ENCODE measurements at regions of chrX and their contacts with region 1.

Region 1: GRCh38 chrX:22081475-22082092 is 49.5 kb downstream of the PHEX start:
- DNase-seq: no peak
- ATAC-seq: peak; percentile 96
- H3K4me3 ChIP-seq: no peak overlapping the region
- H3K27ac ChIP-seq: no peak overlapping the region
- H3K4me1 ChIP-seq: no peaks in the 10 kb centered on the region
- H3K27me3 ChIP-seq: no peaks in the 10 kb centered on the region
- CTCF ChIP-seq: peak; percentile 56 to 79 (median 77)
- EP300 ChIP-seq: no peak
- POLR2A ChIP-seq: no peak
- RAD21 ChIP-seq: peak; percentile 53

Region 2: DNA sequence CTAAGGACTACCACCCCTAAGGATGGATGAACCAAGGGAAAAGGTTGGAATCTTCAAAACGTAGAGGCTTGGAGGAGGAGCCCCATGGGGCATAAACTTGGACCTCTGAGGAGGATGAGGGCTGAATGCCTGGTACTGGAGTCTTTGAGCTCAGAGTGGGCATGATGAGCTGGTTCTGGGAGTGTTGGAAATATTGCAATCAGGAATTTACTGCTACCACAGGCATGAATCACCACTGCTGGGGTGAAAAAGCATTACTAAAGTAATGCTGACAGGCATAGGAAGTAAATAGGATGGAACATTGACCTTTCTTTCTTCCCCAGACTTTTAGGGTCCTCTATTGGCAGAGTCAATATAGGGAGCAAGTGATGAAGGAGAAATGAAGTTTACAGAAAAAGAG is 1709.1 kb before region 1 on chrX:
- CTCF ChIA-PET with region 1: no interaction called
- POLR2A ChIA-PET with region 1: no interaction called
- RAD21 ChIA-PET with region 1: no interaction called
- SMC1A ChIA-PET with region 1: no interaction called
- in situ Hi-C with region 1: no loop called
- intact Hi-C with region 1: no loop called
- DNase-seq: no peak
- ATAC-seq: no peak
- H3K4me3 ChIP-seq: no peak overlapping the region
- H3K27ac ChIP-seq: no peak overlapping the region
- H3K4me1 ChIP-seq: no peaks in the 10 kb centered on the region
- H3K27me3 ChIP-seq: no peaks in the 10 kb centered on the region; a peak in 1 of 4 replicates
- CTCF ChIP-seq: no peak
- EP300 ChIP-seq: no peak
- POLR2A ChIP-seq: no peak
- RAD21 ChIP-seq: no peak

Region 3: DNA sequence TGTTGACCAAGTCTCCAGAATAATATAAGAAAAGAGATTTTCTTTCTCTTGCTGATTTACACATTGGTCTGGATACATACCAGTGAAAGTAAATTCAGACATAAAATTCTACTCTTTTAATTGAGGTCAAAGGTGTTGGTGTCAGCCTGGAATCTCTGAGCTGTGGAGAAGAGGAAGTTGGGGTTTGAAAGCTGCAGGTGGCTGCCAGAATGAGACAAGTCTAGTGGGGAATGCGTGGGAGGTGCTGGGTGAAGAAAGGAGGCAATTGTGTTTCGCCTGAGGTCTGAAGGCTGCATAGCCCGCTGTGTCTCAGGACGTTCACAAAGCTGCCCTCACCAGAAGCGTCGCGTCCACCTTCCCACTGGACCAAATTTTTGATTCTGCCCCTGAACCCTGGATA is 18.3 kb before region 1 on chrX:
- CTCF ChIA-PET with region 1: interaction called, 80 read pairs
- POLR2A ChIA-PET with region 1: interaction called, 3 read pairs
- RAD21 ChIA-PET with region 1: interaction called, 23 read pairs
- SMC1A ChIA-PET with region 1: interaction called, 14 read pairs
- in situ Hi-C with region 1: no loop called
- intact Hi-C with region 1: no loop called
- DNase-seq: peak; percentile 64
- ATAC-seq: peak; percentile 74
- H3K4me3 ChIP-seq: no peak overlapping the region
- H3K27ac ChIP-seq: peak overlapping the region; percentile 74
- H3K4me1 ChIP-seq: peaks cover 20% of the 10 kb centered on the region
- H3K27me3 ChIP-seq: no peaks in the 10 kb centered on the region
- CTCF ChIP-seq: no peak
- EP300 ChIP-seq: peak; percentile 52 to 73; a peak in 2 of 4 replicates
- POLR2A ChIP-seq: no peak
- RAD21 ChIP-seq: no peak

Region 4: DNA sequence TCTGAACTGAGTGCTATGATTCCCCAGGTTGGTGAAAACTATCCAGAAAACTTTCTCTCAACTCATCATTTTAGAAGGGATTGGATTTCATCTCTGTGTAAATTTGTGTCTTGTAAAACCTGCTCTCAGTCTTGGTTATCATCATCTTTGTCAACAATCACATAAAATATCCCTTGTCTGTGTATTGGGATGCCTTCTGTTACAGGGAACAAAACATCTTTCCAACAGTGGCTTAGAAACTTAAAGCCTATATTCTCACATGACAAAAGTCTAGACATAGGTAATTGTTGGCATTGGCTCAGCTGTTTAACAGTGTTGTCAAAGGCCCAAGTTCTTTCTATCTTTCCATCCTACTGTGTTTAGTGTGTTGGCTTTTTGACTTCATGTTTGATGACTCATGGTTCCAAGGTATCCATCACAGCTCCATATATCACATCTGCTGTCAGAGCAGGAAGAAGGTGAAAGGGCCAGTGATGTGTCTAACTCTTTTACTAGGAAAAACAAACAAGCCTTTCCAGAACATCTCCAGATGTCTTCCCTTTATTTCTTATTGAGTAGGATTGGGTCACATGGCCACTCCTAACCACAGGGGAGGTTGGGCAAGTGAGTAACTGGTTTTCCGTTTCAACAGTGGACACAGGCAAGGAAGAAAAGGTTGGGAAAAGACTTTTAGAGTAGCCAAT is 15.6 kb after region 1 on chrX:
- CTCF ChIA-PET with region 1: interaction called, 13 read pairs
- POLR2A ChIA-PET with region 1: no interaction called
- RAD21 ChIA-PET with region 1: interaction called, 3 read pairs
- SMC1A ChIA-PET with region 1: interaction called, 9 read pairs
- in situ Hi-C with region 1: no loop called
- intact Hi-C with region 1: no loop called
- DNase-seq: no peak
- ATAC-seq: no peak
- H3K4me3 ChIP-seq: no peak overlapping the region
- H3K27ac ChIP-seq: no peak overlapping the region
- H3K4me1 ChIP-seq: no peaks in the 10 kb centered on the region
- H3K27me3 ChIP-seq: no peaks in the 10 kb centered on the region
- CTCF ChIP-seq: no peak
- EP300 ChIP-seq: no peak
- POLR2A ChIP-seq: no peak
- RAD21 ChIP-seq: no peak

Region 5: GRCh38 chrX:22122510-22122909 is 40.9 kb after region 1 on chrX:
- CTCF ChIA-PET with region 1: interaction called, 10 read pairs
- POLR2A ChIA-PET with region 1: no interaction called
- RAD21 ChIA-PET with region 1: interaction called, 3 read pairs
- SMC1A ChIA-PET with region 1: interaction called, 4 read pairs
- in situ Hi-C with region 1: no loop called
- intact Hi-C with region 1: no loop called
- DNase-seq: no peak
- ATAC-seq: peak; percentile 37
- H3K4me3 ChIP-seq: no peak overlapping the region
- H3K27ac ChIP-seq: no peak overlapping the region
- H3K4me1 ChIP-seq: no peaks in the 10 kb centered on the region
- H3K27me3 ChIP-seq: no peaks in the 10 kb centered on the region
- CTCF ChIP-seq: no peak
- EP300 ChIP-seq: no peak
- POLR2A ChIP-seq: no peak
- RAD21 ChIP-seq: no peak

Measured in GM12878 (cell line).